MCF 10A (cell line): ENCODE measurements at regions of chr9 and their contacts with region 1.

Region 1: GRCh38 chr9:79382468-79382867 is 189.3 kb upstream of the TLE4 start:
- DNase-seq: peak; percentile 62
- H3K4me3 Mint-ChIP-seq: peak overlapping the region; percentile 18
- H3K27ac Mint-ChIP-seq: peak overlapping the region; percentile 72
- H3K4me1 Mint-ChIP-seq: peaks cover 40% of the 10 kb centered on the region
- H3K27me3 Mint-ChIP-seq: no peaks in the 10 kb centered on the region
- CTCF ChIP-seq: no peak

Region 2: DNA sequence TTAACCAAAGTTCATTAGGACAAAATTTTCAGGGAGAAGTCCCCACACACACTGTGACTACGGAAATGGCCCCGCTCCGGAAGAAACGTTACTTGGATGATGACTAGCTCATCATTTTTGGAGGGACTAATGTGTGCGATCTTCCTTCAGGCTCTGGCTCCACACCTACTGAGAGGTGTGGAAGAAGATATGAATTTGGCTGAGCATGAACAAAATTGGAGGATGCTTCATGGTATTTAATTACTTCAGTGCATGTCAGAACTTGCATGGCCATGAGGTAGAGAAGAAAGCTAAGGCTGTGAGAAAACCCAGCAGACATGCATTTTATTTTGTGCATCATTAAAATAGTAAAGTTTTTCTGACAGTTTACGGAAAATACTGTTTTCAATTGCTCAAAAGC is 12.8 kb before region 1 on chr9:
- CTCF ChIA-PET with region 1: interaction called, 4 read pairs
- POLR2A ChIA-PET with region 1: interaction called, 17 read pairs
- intact Hi-C with region 1: no loop called
- DNase-seq: no peak
- H3K4me3 Mint-ChIP-seq: no peak overlapping the region
- H3K27ac Mint-ChIP-seq: no peak overlapping the region
- H3K4me1 Mint-ChIP-seq: no peaks in the 10 kb centered on the region
- H3K27me3 Mint-ChIP-seq: no peaks in the 10 kb centered on the region
- CTCF ChIP-seq: no peak

Region 3: GRCh38 chr9:79403495-79403894 is 21.0 kb after region 1 on chr9:
- CTCF ChIA-PET with region 1: no interaction called
- POLR2A ChIA-PET with region 1: no interaction called
- intact Hi-C with region 1: no loop called
- DNase-seq: no peak
- H3K4me3 Mint-ChIP-seq: no peak overlapping the region
- H3K27ac Mint-ChIP-seq: no peak overlapping the region
- H3K4me1 Mint-ChIP-seq: no peaks in the 10 kb centered on the region
- H3K27me3 Mint-ChIP-seq: no peaks in the 10 kb centered on the region
- CTCF ChIP-seq: no peak